PC-3 (cell line): ENCODE measurements at regions of chr10 and their contacts with region 1.

Region 1: DNA sequence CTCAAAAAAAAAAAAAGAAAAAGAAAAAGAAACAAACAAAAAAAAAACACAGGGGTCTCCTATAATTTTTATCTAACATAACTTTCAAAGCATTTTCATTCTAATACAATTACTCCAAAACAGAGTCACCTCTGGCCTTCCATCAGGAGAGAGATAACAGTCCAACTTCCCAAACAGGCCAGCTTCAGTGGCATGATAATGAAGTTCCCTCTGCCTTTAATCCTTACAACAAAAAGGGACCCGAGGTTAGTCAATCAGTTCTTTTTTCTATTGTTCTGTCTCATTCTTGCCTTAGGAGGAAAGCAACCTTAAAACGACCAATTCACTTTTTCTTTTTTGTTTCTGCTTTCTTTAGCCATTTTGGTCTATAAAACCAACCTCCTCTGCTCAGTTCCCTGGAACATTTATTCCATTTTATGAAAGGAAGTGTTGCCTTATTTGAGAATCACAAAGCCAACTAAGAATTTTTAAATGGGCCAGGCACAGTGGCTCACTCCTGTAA is 16.5 kb upstream of the FXYD4 start:
- DNase-seq: no peak
- ATAC-seq: no peak
- H3K4me3 ChIP-seq: no peak overlapping the region
- H3K27ac ChIP-seq: peak overlapping the region; percentile 91
- H3K4me1 ChIP-seq: peaks cover 49% of the 10 kb centered on the region
- H3K27me3 ChIP-seq: no peaks in the 10 kb centered on the region
- CTCF ChIP-seq: no peak

Region 2: DNA sequence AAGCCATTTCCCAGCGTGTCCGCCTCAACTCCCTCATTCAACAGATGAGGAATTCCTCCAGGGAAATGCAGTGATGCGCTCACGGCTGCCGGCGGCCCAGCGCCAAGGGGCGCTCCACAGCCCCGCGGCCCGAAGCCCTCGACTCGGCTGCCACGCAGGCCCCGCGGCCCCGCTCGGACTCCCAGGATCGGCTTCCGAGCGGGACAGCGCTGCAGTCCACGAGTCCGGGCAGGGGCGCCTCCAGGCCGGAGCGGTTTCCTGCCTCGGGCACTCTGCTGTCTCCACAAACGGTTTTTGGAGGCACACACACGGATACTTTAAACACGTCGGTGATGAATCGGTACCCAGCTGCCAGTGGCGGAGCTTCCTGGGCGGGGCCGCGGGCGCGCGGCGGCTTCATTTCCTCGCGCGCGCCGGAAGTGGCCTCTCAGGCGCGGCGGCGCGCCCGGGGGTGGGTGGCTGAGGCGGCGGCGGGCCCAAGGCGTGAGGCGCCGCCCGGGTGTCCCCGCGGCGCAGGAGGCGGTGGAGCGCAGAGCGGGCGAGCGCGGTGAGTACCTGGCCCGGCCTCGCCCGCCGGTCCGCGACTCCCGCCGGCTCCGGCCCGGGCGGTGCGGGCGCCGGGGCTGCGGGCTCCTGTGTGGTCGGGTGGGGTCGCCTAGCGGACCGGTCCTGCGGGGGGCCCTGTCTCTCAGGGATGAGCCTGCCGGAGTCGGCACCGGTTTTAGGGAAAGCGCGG is 216.7 kb before region 1 on chr10 and contains the start of gene CSGALNACT2:
- CTCF ChIA-PET with region 1: no interaction called
- POLR2A ChIA-PET with region 1: no interaction called
- intact Hi-C with region 1: loop called (anchors 5 kb)
- DNase-seq: peak; percentile 91
- ATAC-seq: peak; percentile 58
- H3K4me3 ChIP-seq: peak within 1 kb of the TSS; percentile 87
- H3K27ac ChIP-seq: peak within 1 kb of the TSS; percentile 55
- H3K4me1 ChIP-seq: peaks cover 35% of the 10 kb centered on the region
- H3K27me3 ChIP-seq: no peaks in the 10 kb centered on the region
- CTCF ChIP-seq: peak; percentile 7; the same call in 1 of the 2 replicates
- total RNA-seq, gene CSGALNACT2: 3.6 and 3.9 TPM in 2 replicates

Region 3: GRCh38 chr10:43204943-43205671 is 149.8 kb before region 1 on chr10:
- CTCF ChIA-PET with region 1: interaction called, 16 read pairs
- POLR2A ChIA-PET with region 1: no interaction called
- intact Hi-C with region 1: no loop called
- DNase-seq: peak; percentile 70
- ATAC-seq: peak; percentile 89
- H3K4me3 ChIP-seq: no peak overlapping the region
- H3K27ac ChIP-seq: no peak overlapping the region
- H3K4me1 ChIP-seq: no peaks in the 10 kb centered on the region
- H3K27me3 ChIP-seq: no peaks in the 10 kb centered on the region
- CTCF ChIP-seq: peak; percentile 98

Region 4: GRCh38 chr10:43255634-43256431 is 99.1 kb before region 1 on chr10:
- CTCF ChIA-PET with region 1: no interaction called
- POLR2A ChIA-PET with region 1: no interaction called
- intact Hi-C with region 1: no loop called
- DNase-seq: peak; percentile 48
- ATAC-seq: peak; percentile 62
- H3K4me3 ChIP-seq: no peak overlapping the region
- H3K27ac ChIP-seq: no peak overlapping the region
- H3K4me1 ChIP-seq: no peaks in the 10 kb centered on the region; the same call in 1 of the 2 replicates
- H3K27me3 ChIP-seq: no peaks in the 10 kb centered on the region
- CTCF ChIP-seq: peak; percentile 80

Region 5: DNA sequence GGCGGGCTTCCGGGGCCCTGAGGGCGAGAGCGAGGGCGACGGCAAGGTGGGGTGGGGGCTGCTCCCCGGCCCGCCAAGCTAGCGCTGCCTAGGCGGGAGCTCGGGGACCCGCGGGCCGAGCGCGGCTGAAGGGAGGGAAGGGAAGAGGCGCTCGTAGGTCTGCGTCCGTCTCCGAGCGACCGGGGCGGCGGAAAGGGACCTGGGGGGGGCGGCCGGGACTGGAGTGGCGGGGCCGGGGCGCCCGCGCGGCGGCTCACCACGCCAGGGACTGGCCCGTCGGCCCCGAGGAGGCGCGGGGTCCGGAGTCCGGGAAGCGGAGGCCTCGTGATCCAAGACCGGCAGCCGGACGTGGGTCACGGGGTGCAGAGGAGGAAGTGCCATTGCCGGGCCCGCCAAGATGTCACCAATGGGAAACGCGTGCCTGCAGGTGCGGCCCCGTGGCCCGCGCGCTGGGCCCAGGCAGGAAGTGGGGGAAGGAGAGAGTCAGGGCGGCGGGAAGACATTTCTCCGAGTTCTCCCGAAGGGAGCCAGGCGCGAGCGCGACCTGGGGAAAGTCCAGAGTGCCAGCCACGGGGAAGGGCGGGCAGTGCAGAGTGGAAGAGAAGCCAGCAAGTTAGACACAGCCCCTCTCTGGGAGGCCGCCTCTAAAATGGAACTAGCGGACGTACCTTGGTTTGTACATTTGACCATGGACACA is 42.1 kb after region 1 on chr10:
- CTCF ChIA-PET with region 1: no interaction called
- POLR2A ChIA-PET with region 1: no interaction called
- intact Hi-C with region 1: loop called (anchors 5 kb)
- DNase-seq: peak; percentile 96
- ATAC-seq: peak; percentile 80
- H3K4me3 ChIP-seq: peak overlapping the region; percentile 78
- H3K27ac ChIP-seq: peak overlapping the region; percentile 93
- H3K4me1 ChIP-seq: peaks cover 54% of the 10 kb centered on the region
- H3K27me3 ChIP-seq: no peaks in the 10 kb centered on the region
- CTCF ChIP-seq: no peak